Ascending aorta (tissue), 2 donors: ENCODE measurements at regions of chr11 and their contacts with region 1.

Region 1: DNA sequence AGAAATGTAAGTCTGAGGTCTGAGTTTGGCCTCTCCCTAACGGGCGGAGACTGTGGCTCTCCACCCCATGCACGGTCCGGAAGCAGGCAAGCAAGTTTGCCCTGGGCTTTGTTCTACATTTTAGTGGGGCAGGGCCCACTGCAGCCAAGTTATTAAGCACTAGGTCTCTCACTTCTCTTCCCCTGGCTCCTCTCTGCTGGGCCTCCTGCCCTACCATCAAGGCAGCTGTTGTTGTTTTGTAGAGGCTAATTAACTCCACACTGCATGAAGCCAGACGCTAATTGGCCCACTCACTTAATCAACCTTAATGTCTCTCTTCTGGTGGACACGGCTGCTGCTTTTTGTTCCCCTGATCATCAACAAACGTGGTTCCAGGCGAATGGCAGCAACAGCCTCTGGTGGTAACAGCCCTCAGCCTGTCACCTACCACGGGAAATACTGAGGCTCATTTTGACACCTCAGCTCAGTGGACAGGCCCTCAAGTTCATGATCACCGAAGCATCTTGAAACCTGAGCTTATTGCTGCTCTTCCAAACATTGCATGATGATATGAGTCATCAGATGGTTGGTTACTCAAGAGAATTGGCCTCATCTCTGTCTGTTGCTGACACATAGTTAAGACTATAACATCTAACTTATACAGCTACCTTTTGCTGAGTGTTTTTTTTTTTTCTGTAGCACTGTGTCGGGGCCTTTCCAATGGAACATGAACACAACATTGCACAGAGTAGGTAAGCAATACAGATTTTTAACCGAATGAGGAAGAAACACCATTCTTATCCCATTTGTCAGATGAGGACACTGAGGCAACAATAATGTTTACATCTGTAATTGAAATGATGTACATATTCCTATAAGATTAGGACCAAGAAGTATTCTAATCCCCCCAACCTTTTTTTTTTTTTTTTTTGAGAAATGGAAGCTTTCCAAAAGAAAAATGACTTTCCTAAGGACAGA is 20.8 kb upstream of the LMO2 start:
- DNase-seq: no peak
- H3K4me3 ChIP-seq: no peak overlapping the region
- H3K27ac ChIP-seq: no peak overlapping the region
- H3K4me1 ChIP-seq: no peaks in the 10 kb centered on the region
- H3K27me3 ChIP-seq: no peaks in the 10 kb centered on the region
- CTCF ChIP-seq: no peak

Region 2: DNA sequence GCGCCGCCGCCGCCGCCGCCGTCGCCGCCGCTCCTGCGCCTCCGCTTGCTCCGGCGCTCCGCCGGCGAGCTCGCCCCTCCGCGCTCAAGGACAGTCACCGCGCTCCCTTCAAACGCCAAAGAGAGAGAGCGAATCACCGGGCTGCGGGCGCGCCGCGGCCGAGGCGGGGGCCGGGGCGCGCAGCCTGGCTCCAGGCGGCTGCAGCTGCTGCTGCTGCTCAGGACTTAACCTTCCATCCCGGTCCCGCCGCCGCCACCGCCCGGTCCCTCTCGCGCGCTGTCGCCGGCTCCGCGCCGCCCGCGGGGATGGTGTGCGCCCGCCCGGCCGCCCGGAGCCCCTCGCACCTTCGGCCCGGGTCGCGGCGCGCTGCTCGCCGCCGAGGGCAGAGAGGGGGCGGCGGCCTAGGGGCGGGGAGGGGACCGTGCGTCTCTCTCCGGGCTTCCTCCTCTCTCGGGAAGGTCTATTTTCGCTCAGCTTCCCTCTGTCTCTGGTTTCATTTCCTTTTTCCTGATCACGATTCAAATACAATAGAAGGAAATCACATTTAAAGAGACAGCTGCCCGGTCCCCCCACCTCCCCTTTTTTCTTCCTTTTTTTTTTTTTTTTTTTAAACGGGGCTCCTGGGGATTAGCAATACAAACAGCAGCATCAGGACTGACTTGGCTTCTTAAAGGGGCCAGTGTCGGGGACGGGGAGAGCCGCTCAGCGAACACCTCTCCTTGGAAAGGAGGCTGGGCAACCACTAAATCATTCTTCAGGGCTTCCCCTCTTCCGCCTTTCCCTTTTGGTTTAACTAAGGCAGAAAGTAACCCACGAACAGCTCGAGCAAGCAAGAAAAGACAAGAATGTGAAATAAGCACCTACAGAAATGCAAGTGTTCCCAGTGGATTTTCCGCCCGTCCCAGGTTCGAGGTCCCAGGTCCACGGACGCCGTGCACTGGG is 42.9 kb before region 1 on chr11:
- intact Hi-C with region 1: loop called (anchors 5 kb)
- DNase-seq: no peak
- H3K4me3 ChIP-seq: peak overlapping the region; percentile 75 to 92
- H3K27ac ChIP-seq: peak overlapping the region; percentile 60 to 77
- H3K4me1 ChIP-seq: peaks cover 0 to 10% of the 10 kb centered on the region in 2 donors
- H3K27me3 ChIP-seq: no peaks in the 10 kb centered on the region
- CTCF ChIP-seq: no peak

Region 3: GRCh38 chr11:34013898-34014571 is 101.4 kb after region 1 on chr11:
- intact Hi-C with region 1: no loop called
- DNase-seq: no peak
- H3K4me3 ChIP-seq: no peak overlapping the region
- H3K27ac ChIP-seq: no peak overlapping the region
- H3K4me1 ChIP-seq: no peaks in the 10 kb centered on the region
- H3K27me3 ChIP-seq: no peaks in the 10 kb centered on the region
- CTCF ChIP-seq: no peak